Lower leg skin (tissue), 4 donors: ENCODE measurements at regions of chr4 and their contacts with region 1.

Region 1: DNA sequence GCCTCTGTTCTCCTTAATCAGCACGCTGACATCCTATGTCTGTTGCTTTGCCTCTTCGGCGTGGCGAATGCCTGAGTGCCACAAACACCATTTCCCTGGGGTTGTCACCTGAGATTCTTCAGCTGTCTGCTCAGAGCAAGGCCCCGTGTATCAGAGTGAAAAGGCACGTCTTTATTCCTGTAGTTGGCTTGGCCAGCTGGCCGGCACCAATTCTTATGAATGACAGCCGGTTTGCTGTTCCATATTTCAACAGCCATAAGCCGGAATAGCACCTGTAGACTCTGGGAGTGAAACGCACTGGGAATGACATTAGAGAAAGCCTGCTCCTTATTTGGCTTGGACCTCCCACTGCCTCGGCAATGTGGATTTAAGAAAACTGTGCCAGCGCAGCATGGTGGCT is 89.3 kb downstream of the MGST2 start:
- DNase-seq: peak in 1 of 2 donors; percentile 58
- H3K4me3 ChIP-seq: no peak overlapping the region
- CTCF ChIP-seq: no peak
- POLR2A ChIP-seq: no peak

Region 2: DNA sequence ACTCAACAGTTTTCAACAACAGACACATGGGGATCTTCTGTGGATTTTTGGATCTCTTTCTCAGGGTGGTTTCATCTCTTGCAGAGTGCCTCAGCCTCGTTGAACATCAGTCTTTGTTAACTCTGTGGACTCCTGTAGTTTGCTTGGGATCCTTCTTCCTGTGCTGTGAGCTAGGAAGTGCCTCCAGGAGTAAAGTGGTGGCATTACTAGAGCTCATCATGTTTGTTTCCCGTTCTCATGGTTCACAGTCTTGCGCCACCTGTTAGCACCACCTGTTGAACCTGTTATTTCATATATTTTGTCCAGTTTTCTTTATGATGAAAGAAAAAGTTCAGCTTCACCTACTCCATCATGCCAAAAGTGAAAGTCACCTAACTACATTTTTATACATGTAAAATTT is 425.2 kb before region 1 on chr4:
- intact Hi-C with region 1: loop called (anchors 5 kb)
- DNase-seq: no peak
- H3K4me3 ChIP-seq: no peak overlapping the region
- CTCF ChIP-seq: no peak
- POLR2A ChIP-seq: no peak